A549 (cell line): ENCODE measurements at regions of chr18 and their contacts with region 1.

Region 1: DNA sequence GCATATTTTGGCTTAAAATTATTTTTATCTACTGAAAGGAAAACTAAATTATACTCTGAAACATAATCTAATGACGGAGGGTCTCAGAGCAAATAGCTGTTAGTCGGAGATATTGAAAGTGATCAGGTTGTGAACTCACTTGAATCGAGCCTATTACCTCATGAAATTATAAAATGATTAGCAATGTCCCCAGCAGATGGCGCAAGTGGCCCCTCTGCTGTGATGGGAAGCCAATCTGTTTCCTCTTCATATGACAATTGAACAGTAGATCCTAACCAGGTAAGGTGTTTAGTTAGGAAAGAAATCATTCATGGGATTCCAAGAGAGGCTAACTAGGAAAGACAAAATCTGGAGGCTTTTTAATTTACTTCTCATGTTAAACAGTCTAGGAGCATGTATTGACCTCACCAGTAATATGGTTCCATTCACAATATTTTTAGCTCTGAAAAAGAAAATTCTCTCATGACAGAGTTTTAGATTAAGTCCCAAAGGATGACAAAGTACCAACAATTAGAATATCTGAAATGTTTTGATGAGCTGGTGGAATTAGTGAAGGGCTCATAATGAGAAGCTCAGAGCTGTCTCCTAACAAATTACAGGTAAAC is 29.9 kb upstream of the MPPE1 start:
- DNase-seq: peak; percentile 58 to 69
- ATAC-seq: peak; percentile 54 to 81; a peak in 4 of 6 replicates
- H3K4me3 ChIP-seq: no peak overlapping the region
- H3K27ac ChIP-seq: peak overlapping the region in 1 of 2 experiments; percentile 55; a peak in 2 of 6 replicates
- H3K4me1 ChIP-seq: peaks cover 6% of the 10 kb centered on the region; the same call in 1 of the 3 replicates
- CTCF ChIP-seq: peak; percentile 74
- EP300 ChIP-seq: no peak
- POLR2A ChIP-seq: no peak
- RAD21 ChIP-seq: peak; percentile 85 to 86

Region 2: GRCh38 chr18:11379660-11380059 is 558.3 kb before region 1 on chr18:
- CTCF ChIA-PET with region 1: no interaction called
- POLR2A ChIA-PET with region 1: no interaction called
- DNase-seq: no peak
- ATAC-seq: no peak
- H3K4me3 ChIP-seq: no peak overlapping the region
- H3K27ac ChIP-seq: no peak overlapping the region
- H3K4me1 ChIP-seq: no peaks in the 10 kb centered on the region
- CTCF ChIP-seq: no peak
- EP300 ChIP-seq: no peak
- POLR2A ChIP-seq: no peak
- RAD21 ChIP-seq: no peak

Region 3: DNA sequence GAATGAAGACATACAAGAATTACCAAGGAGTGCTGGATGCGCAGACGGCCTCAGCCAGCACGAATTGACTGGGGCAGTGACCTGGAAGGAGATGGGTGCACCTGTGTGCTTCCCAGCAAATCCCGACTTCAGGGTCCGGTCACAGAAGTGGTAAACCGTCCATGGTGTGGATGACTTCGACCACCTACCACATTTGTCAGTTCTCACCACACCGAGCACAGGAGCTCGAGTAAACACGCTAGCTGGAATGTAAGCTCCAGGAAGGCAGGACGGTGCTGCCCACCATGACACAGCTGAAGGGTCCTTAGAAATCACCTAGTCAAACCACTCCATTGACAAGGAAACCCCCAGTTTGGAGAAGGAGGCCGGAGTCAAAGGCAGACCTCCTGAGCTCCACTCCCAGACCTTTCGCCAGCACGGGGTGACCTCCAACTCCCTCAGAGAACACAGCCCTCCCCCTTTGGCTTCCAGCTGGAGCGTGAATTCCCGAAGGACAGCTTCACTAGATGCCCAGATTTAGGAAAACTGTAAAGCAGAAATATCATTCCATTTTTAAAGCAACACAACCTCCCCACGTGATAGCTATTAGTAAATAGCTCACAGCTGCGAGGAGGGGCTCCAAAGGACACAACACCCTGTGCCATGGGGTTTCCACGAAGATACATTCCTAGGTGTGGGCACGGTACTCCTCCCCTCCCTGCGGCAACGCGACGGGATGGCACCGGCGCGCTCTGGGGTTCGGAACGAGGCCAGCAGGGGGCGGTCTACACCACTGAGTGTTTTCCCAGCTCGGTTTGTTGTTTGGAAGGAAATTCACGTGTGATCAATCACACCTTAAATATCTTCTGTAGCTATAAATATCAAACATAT is 283.0 kb before region 1 on chr18:
- CTCF ChIA-PET with region 1: interaction called, 13 read pairs
- POLR2A ChIA-PET with region 1: no interaction called
- DNase-seq: peak; percentile 37 to 65
- ATAC-seq: peak; percentile 88 to 93
- H3K4me3 ChIP-seq: 0 out of 3 replicates have a peak overlapping the region, but pooled peaks have one; percentile 29
- H3K27ac ChIP-seq: 0 out of 6 replicates have a peak overlapping the region, but pooled peaks of 1 of the 2 experiments have one; percentile 18
- H3K4me1 ChIP-seq: no peaks in the 10 kb centered on the region
- CTCF ChIP-seq: peak; percentile 78
- EP300 ChIP-seq: no peak
- POLR2A ChIP-seq: no peak
- RAD21 ChIP-seq: peak; percentile 76 to 84

Region 4: GRCh38 chr18:11955239-11956029 is 17.5 kb after region 1 on chr18:
- CTCF ChIA-PET with region 1: interaction called, 14 read pairs
- POLR2A ChIA-PET with region 1: no interaction called
- DNase-seq: peak in 1 of 2 experiments; percentile 79
- ATAC-seq: peak; percentile 74 to 75
- H3K4me3 ChIP-seq: no peak overlapping the region
- H3K27ac ChIP-seq: peak overlapping the region; percentile 74 to 85
- H3K4me1 ChIP-seq: peaks cover 10% of the 10 kb centered on the region
- CTCF ChIP-seq: no peak
- EP300 ChIP-seq: no peak
- POLR2A ChIP-seq: no peak
- RAD21 ChIP-seq: no peak

Region 5: DNA sequence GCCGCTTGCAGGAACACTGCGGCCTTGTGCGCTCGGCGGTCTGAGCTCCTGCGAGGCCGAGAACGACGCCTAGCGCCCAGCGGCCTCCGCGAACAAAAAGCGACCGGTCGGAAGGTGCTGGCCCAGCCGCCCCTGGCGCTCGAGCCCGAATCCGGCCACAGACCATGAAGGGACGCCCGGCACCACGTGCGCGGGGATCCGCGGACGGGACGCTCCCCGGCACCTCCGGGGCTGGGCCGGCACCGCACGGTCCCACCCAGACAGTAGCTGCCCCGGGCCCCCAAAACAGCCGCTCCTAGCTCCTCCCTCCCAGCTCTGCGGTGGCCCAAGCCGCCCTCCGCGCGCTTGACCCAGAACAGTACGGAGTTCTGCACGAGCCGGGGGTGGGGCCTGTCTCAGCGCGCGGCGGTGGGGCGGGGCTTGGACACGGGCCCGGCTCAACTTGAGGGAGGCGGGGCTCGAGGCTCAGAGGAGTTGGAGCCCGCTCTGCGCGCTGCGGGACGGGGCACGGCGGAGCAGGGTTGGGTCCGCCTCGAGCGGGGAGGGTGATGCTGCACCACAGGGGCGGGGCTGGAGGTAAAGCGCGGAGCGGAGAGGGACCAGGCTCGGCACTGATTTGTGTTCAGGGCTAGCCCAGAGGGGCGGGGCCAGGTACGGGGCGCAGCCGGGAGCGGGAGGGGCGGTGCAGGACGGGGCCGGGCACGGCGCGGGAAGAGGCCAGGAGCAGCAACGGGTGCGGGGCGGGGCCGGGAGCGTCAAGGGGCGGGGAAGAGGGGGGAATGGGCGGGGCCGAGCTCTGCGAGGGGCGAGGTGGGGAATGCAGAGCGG is 42.8 kb after region 1 on chr18:
- CTCF ChIA-PET with region 1: interaction called, 41 read pairs
- POLR2A ChIA-PET with region 1: interaction called, 16 read pairs
- DNase-seq: peak; percentile 87 to 98
- ATAC-seq: peak; percentile 87 to 95
- H3K4me3 ChIP-seq: peak overlapping the region; percentile 55
- H3K27ac ChIP-seq: peak overlapping the region; percentile 97 to 99
- H3K4me1 ChIP-seq: peaks cover 36% of the 10 kb centered on the region
- CTCF ChIP-seq: no peak
- EP300 ChIP-seq: no peak
- POLR2A ChIP-seq: peak; percentile 67
- RAD21 ChIP-seq: no peak

Region 6: GRCh38 chr18:12015416-12016062 is 77.6 kb after region 1 on chr18:
- CTCF ChIA-PET with region 1: interaction called, 13 read pairs
- POLR2A ChIA-PET with region 1: no interaction called
- DNase-seq: no peak
- ATAC-seq: no peak
- H3K4me3 ChIP-seq: no peak overlapping the region
- H3K27ac ChIP-seq: no peak overlapping the region
- H3K4me1 ChIP-seq: no peaks in the 10 kb centered on the region
- CTCF ChIP-seq: no peak
- EP300 ChIP-seq: no peak
- POLR2A ChIP-seq: no peak
- RAD21 ChIP-seq: no peak